Activated CD4-positive, alpha-beta memory T cell treated with anti-CD3 and anti-CD28 coated beads for 36 hours (primary cell): ENCODE measurements at regions of chr22 and their contacts with region 1.

Region 1: GRCh38 chr22:47000888-47001287 is 238.4 kb downstream of the TBC1D22A start:
- DNase-seq: no peak
- H3K4me3 Mint-ChIP-seq: no peak overlapping the region
- H3K27ac Mint-ChIP-seq: peak overlapping the region; percentile 29
- H3K4me1 Mint-ChIP-seq: peaks cover 18% of the 10 kb centered on the region
- H3K27me3 Mint-ChIP-seq: no peaks in the 10 kb centered on the region

Region 2: GRCh38 chr22:47022075-47022473 is 21.2 kb after region 1 on chr22:
- CTCF ChIA-PET with region 1: no interaction called
- POLR2A ChIA-PET with region 1: no interaction called
- intact Hi-C with region 1: loop called (anchors 2 kb)
- DNase-seq: no peak
- H3K4me3 Mint-ChIP-seq: no peak overlapping the region
- H3K27ac Mint-ChIP-seq: peak overlapping the region; percentile 31
- H3K4me1 Mint-ChIP-seq: peaks cover 36% of the 10 kb centered on the region
- H3K27me3 Mint-ChIP-seq: no peaks in the 10 kb centered on the region

Region 3: GRCh38 chr22:47090591-47091245 is 89.8 kb after region 1 on chr22:
- CTCF ChIA-PET with region 1: interaction called, 4 read pairs
- POLR2A ChIA-PET with region 1: no interaction called
- intact Hi-C with region 1: loop called (anchors 10 kb)
- DNase-seq: peak; percentile 44
- H3K4me3 Mint-ChIP-seq: peak overlapping the region; percentile 48
- H3K27ac Mint-ChIP-seq: no peak overlapping the region
- H3K4me1 Mint-ChIP-seq: peaks cover 50% of the 10 kb centered on the region
- H3K27me3 Mint-ChIP-seq: no peaks in the 10 kb centered on the region